Dorsolateral prefrontal cortex (tissue), 120 donors: ENCODE measurements at regions of chr3 and their contacts with region 1.

Region 1: GRCh38 chr3:123652346-123652984 is 67.6 kb upstream of the HACD2 start:
- DNase-seq: peak; percentile 63 to 88 (median 76)
- H3K4me3 ChIP-seq: no peak overlapping the region
- H3K27ac ChIP-seq: peak overlapping the region in 49 of 59 donors; percentile 10 to 86 (median 68)
- H3K27me3 ChIP-seq: no peaks in the 10 kb centered on the region
- CTCF ChIP-seq: peak; percentile 61 to 96 (median 88)

Region 2: GRCh38 chr3:123702720-123703119 is 50.3 kb after region 1 on chr3:
- intact Hi-C with region 1: loop called in 1 of 2 experiments (anchors 1 kb)
- DNase-seq: no peak
- H3K4me3 ChIP-seq: no peak overlapping the region
- H3K27ac ChIP-seq: no peak overlapping the region
- H3K27me3 ChIP-seq: no peaks in the 10 kb centered on the region
- CTCF ChIP-seq: no peak

Region 3: GRCh38 chr3:123986427-123986826 is 334.0 kb after region 1 on chr3:
- intact Hi-C with region 1: loop called in 1 of 2 experiments (anchors 10 kb)
- DNase-seq: no peak
- H3K4me3 ChIP-seq: no peak overlapping the region
- H3K27ac ChIP-seq: no peak overlapping the region
- H3K27me3 ChIP-seq: peaks cover 0 to 4% (median 0%) of the 10 kb centered on the region in 45 donors
- CTCF ChIP-seq: no peak